Naive thymus-derived CD4-positive, alpha-beta T cell (primary cell): ENCODE measurements at regions of chr11 and their contacts with region 1.

Region 1: GRCh38 chr11:77091146-77091940 is 11.3 kb upstream of the OMP start:
- DNase-seq: peak; percentile 59 to 79 (median 74)
- ATAC-seq: peak; percentile 94
- H3K4me3 ChIP-seq: no peak overlapping the region
- H3K4me3 Mint-ChIP-seq: no peak overlapping the region
- H3K27ac ChIP-seq: no peak overlapping the region
- H3K27ac Mint-ChIP-seq: peak overlapping the region in 1 of 9 donors; percentile 32
- H3K4me1 ChIP-seq: no peaks in the 10 kb centered on the region
- H3K4me1 Mint-ChIP-seq: peaks cover 0 to 7% (median 4%) of the 10 kb centered on the region in 7 donors
- H3K27me3 ChIP-seq: no peaks in the 10 kb centered on the region
- H3K27me3 Mint-ChIP-seq: no peaks in the 10 kb centered on the region

Region 2: GRCh38 chr11:76734456-76735420 is 356.6 kb before region 1 on chr11:
- CTCF ChIA-PET with region 1: interaction called, 6 read pairs
- POLR2A ChIA-PET with region 1: no interaction called
- intact Hi-C with region 1: loop called (anchors 1 to 2 kb)
- DNase-seq: no peak
- ATAC-seq: no peak
- H3K4me3 ChIP-seq: no peak overlapping the region
- H3K4me3 Mint-ChIP-seq: no peak overlapping the region
- H3K27ac ChIP-seq: no peak overlapping the region
- H3K27ac Mint-ChIP-seq: no peak overlapping the region
- H3K4me1 ChIP-seq: no peaks in the 10 kb centered on the region
- H3K4me1 Mint-ChIP-seq: peaks cover 0 to 3% (median 0%) of the 10 kb centered on the region in 7 donors
- H3K27me3 ChIP-seq: no peaks in the 10 kb centered on the region
- H3K27me3 Mint-ChIP-seq: peaks cover 0 to 8% (median 0%) of the 10 kb centered on the region in 5 donors

Region 3: GRCh38 chr11:76807206-76807875 is 284.0 kb before region 1 on chr11:
- CTCF ChIA-PET with region 1: no interaction called
- POLR2A ChIA-PET with region 1: no interaction called
- intact Hi-C with region 1: loop called in 1 of 2 experiments (anchors 2 kb)
- DNase-seq: peak; percentile 25 to 69 (median 49)
- ATAC-seq: peak; percentile 76
- H3K4me3 ChIP-seq: no peak overlapping the region
- H3K4me3 Mint-ChIP-seq: peak overlapping the region in 5 of 10 donors; percentile 9 to 48 (median 25)
- H3K27ac ChIP-seq: no peak overlapping the region
- H3K27ac Mint-ChIP-seq: peak overlapping the region in 1 of 9 donors; percentile 69
- H3K4me1 ChIP-seq: peaks cover 0 to 10% of the 10 kb centered on the region in 2 donors
- H3K4me1 Mint-ChIP-seq: peaks cover 5 to 52% (median 29%) of the 10 kb centered on the region in 7 donors
- H3K27me3 ChIP-seq: no peaks in the 10 kb centered on the region
- H3K27me3 Mint-ChIP-seq: peaks cover 6 to 35% (median 15%) of the 10 kb centered on the region in 5 donors

Region 4: DNA sequence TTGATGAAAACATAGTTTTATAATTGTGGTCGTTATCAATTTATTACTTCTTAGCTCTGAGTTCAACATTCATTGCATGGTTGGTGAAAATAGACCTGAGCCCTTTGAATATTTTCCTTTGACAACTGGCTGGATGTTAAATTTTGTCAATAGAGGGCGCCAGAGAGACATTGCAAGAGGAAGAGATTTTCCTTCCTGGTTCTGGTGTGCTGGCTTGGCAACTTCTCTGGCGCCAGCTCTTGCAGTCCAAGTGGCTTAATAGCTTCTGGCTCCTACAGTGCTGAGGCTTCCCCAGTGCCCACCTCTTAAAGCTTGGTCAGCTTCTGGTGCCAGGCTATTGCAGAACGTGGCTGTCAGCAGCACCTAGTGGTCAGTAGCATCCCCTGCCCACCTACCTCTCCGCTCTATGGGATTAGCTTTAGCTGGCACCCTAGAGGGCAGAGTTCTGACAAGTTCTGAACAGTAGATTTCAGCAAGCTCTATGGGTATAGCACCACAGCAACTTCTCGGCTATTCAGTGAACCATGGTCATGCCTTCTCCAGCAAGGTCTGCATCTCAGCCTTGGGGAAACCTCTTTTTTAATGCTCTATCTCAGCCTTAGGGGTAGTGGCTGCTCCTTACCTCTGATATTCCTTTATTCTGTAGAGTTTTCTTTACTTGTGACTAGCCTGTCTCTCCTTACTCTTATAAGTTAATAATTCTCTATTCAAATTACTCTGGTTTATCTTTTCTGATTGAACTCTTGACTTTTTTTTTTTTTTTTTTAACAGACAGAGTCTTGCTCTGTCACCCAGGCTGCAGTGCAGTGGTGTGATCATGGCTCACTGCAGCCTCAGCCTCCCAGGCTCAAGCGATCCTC is 171.2 kb before region 1 on chr11:
- CTCF ChIA-PET with region 1: interaction called, 29 read pairs
- POLR2A ChIA-PET with region 1: interaction called, 3 read pairs
- intact Hi-C with region 1: loop called in 1 of 2 experiments (anchors 1 kb)
- DNase-seq: peak; percentile 16 to 78 (median 74)
- ATAC-seq: peak; percentile 84
- H3K4me3 ChIP-seq: peak overlapping the region; percentile 51
- H3K4me3 Mint-ChIP-seq: peak overlapping the region; percentile 18 to 86 (median 77)
- H3K27ac ChIP-seq: no peak overlapping the region
- H3K27ac Mint-ChIP-seq: peak overlapping the region in 1 of 9 donors; percentile 52
- H3K4me1 ChIP-seq: peaks cover 0 to 4% of the 10 kb centered on the region in 2 donors
- H3K4me1 Mint-ChIP-seq: peaks cover 0 to 12% (median 11%) of the 10 kb centered on the region in 7 donors
- H3K27me3 ChIP-seq: no peaks in the 10 kb centered on the region
- H3K27me3 Mint-ChIP-seq: peaks cover 0 to 5% (median 0%) of the 10 kb centered on the region in 5 donors

Region 5: DNA sequence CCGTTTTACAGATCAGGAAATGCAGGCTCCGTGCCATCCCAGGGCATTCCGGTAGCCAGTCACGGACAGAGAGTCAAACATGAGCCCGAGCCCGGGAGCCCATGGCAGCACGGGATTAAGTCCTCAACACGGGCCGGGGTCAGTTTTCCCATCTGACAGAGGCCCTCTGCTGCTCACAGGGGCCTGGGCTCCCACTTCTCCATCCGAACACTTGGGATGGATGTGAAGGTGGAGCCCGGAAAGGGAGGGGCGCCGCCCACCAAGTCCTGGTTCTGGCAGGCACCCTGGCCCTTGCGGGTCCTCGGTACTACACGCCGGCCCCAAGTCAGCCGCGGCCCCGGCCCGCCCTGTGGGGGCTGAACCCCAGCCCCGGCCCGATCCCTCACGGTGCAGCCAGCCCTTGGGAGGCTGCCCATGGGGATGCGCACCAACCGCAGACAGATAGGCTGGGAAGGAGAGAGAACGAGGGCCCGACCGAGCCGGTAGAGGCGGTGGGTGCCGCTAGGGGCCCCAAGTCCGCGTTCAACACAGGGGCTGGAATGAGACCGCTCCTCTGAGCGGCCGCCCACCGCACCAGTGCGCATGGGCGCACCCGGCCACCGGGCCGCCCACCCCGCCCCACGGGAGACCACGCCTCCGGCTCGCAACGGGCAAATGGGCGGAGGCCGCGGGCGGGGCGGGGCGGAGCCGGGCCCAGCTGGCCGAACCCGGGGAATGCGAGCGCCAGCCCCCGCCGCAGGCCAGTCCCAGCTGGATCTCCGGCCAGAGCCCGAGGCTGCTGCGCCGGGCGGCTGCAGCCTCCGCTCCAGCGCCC is 24.9 kb before region 1 on chr11 and contains the start of gene CAPN5:
- CTCF ChIA-PET with region 1: interaction called, 25 read pairs
- POLR2A ChIA-PET with region 1: no interaction called
- intact Hi-C with region 1: loop called (anchors 1 to 2 kb)
- DNase-seq: peak; percentile 72 to 93 (median 85)
- ATAC-seq: peak; percentile 98
- H3K4me3 ChIP-seq: peak within 1 kb of the TSS; percentile 73
- H3K4me3 Mint-ChIP-seq: peak within 1 kb of the TSS; percentile 81 to 95 (median 87)
- H3K27ac ChIP-seq: peak within 1 kb of the TSS; percentile 73
- H3K27ac Mint-ChIP-seq: peak within 1 kb of the TSS in 8 of 9 donors; percentile 49 to 95 (median 82)
- H3K4me1 ChIP-seq: peaks cover 0 to 9% of the 10 kb centered on the region in 2 donors
- H3K4me1 Mint-ChIP-seq: peaks cover 5 to 28% (median 21%) of the 10 kb centered on the region in 7 donors
- H3K27me3 ChIP-seq: no peaks in the 10 kb centered on the region
- H3K27me3 Mint-ChIP-seq: peaks cover 0 to 32% (median 0%) of the 10 kb centered on the region in 5 donors
- total RNA-seq, gene CAPN5: 0.94 to 5.8 (median 5.6) TPM

Region 6: DNA sequence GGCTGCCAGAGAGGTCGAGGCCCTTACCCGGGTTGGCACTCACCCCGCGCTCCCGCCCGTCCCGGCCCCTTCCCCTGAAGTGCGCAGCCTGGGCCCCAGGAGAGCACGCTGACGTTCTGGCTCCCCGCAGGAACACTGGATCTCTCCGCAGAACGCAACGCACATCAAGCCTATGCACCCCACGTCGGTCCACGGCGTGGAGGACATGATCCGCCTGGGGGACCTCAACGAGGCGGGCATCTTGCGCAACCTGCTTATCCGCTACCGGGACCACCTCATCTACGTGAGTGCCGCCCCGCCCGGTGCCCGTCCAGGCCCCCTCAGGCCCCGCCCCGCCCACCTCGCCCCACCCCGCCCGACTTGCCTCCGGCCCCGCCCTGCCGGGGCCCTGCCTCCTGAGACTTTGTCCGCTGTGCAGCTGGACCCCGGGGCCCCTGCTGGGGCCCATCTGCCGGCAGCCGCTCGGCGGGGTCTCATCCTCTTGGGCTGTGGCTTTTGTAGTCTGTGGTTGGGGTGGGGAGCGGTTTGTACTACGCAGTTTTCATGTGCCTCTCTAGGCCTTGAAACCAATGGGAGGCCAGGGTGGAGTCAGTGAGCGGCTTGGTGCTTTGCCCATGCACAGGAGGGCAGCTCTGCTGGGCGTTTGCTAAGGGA is 56.5 kb after region 1 on chr11:
- CTCF ChIA-PET with region 1: no interaction called
- POLR2A ChIA-PET with region 1: no interaction called
- intact Hi-C with region 1: no loop called
- DNase-seq: peak in 4 of 9 donors; percentile 8 to 12 (median 10)
- ATAC-seq: peak; percentile 68
- H3K4me3 ChIP-seq: peak overlapping the region; percentile 35
- H3K4me3 Mint-ChIP-seq: peak overlapping the region; percentile 48 to 81 (median 75)
- H3K27ac ChIP-seq: no peak overlapping the region
- H3K27ac Mint-ChIP-seq: peak overlapping the region in 4 of 9 donors; percentile 7 to 84 (median 57)
- H3K4me1 ChIP-seq: peaks cover 9 to 22% of the 10 kb centered on the region in 2 donors
- H3K4me1 Mint-ChIP-seq: peaks cover 13 to 37% (median 22%) of the 10 kb centered on the region in 7 donors
- H3K27me3 ChIP-seq: no peaks in the 10 kb centered on the region
- H3K27me3 Mint-ChIP-seq: peaks cover 0 to 21% (median 4%) of the 10 kb centered on the region in 5 donors